Activated CD4-positive, alpha-beta T cell treated with anti-CD3 and anti-CD28 coated beads for 36 hours (primary cell): ENCODE measurements at regions of chr12 and their contacts with region 1.

Region 1: GRCh38 chr12:54398995-54399793 is 14.7 kb upstream of the ZNF385A start:
- DNase-seq: peak; percentile 92
- ATAC-seq: peak; percentile 95
- H3K4me3 Mint-ChIP-seq: no peak overlapping the region
- H3K27ac Mint-ChIP-seq: no peak overlapping the region
- H3K4me1 Mint-ChIP-seq: peaks cover 6% of the 10 kb centered on the region
- H3K27me3 Mint-ChIP-seq: no peaks in the 10 kb centered on the region

Region 2: DNA sequence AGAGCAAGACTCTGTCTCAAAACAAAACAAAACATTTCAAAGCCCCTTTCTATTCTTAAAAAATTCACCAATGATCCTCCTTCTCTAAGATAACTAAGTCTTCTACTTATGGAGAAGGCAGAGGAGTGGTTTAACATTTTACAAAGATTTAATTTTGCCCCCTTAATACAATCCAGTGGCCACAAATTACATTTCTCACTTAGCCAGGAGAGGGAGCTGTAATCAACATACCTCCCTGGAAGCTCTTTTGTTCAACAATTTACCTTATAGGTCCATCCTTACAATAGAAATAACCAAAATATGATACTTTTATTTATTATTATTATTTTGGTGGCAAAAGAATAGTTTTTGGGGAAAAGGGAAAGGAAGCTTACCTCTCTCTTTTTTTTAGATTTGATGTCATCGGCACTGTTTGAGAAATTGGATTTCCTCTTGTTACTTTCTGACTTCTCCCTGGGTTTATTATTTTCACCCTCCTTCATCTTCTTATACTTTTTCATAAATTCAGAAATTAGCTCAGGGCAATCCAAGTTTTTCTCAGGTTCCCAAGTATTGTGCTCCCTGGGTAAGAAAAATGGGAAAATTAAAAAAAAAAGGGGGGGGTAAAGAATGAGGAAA is 147.4 kb before region 1 on chr12:
- CTCF ChIA-PET with region 1: interaction called, 11 read pairs
- POLR2A ChIA-PET with region 1: no interaction called
- intact Hi-C with region 1: no loop called
- DNase-seq: no peak
- ATAC-seq: peak; percentile 75
- H3K4me3 Mint-ChIP-seq: no peak overlapping the region
- H3K27ac Mint-ChIP-seq: no peak overlapping the region
- H3K4me1 Mint-ChIP-seq: peaks cover 10% of the 10 kb centered on the region
- H3K27me3 Mint-ChIP-seq: no peaks in the 10 kb centered on the region

Region 3: GRCh38 chr12:54388235-54389138 is 10.7 kb before region 1 on chr12:
- CTCF ChIA-PET with region 1: interaction called, 12 read pairs
- POLR2A ChIA-PET with region 1: no interaction called
- intact Hi-C with region 1: no loop called
- DNase-seq: peak; percentile 31
- ATAC-seq: no peak
- H3K4me3 Mint-ChIP-seq: no peak overlapping the region
- H3K27ac Mint-ChIP-seq: no peak overlapping the region
- H3K4me1 Mint-ChIP-seq: peaks cover 8% of the 10 kb centered on the region
- H3K27me3 Mint-ChIP-seq: no peaks in the 10 kb centered on the region

Region 4: DNA sequence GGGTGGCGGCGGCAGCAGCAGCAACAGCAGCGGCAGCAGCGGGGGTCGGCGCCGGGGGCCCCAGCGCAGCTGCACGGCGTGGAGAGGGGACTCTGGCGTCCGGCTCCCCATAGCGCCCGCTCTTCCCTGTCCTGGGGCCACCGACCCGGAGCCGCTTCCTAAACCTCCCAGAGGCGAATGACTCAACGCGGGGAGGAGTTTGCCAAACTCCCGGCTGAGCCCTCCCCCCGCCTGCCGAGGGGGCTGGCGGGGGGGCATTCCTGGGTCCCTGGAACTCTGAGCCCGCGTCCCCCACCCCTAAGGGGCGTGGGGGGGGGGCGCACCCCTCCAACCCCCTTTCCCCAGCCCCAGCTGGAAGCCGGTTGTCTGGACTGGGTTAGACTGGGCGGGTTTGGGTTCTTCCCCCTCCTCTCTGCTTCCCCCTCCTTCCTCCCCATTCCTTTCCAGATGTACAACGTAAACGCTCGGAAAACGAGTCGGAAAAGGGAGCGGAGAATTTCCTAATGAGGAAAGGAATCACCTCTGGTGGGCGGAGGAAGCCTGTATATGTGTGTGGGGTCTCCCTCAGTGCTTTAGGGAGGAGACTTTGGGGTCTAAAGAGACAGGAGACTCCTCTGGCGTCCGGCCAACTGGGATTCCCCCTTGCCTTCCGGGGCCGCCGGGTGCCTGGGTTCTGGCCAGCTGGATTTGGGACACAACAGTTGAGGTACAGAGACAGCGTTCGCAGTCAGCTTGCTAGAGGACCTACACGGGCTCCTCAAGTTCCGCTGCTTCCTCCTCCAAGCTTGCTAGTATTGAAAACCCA is 20.1 kb after region 1 on chr12 and contains the start of gene ITGA5:
- CTCF ChIA-PET with region 1: interaction called, 638 read pairs
- POLR2A ChIA-PET with region 1: no interaction called
- intact Hi-C with region 1: no loop called
- DNase-seq: peak; percentile 66
- ATAC-seq: peak; percentile 42
- H3K4me3 Mint-ChIP-seq: peak within 1 kb of the TSS; percentile 96
- H3K27ac Mint-ChIP-seq: peak within 1 kb of the TSS; percentile 95
- H3K4me1 Mint-ChIP-seq: peaks cover 42% of the 10 kb centered on the region
- H3K27me3 Mint-ChIP-seq: no peaks in the 10 kb centered on the region
- total RNA-seq, gene ITGA5: 38.6 to 58.0 TPM

Region 5: GRCh38 chr12:54463034-54463433 is 63.8 kb after region 1 on chr12:
- CTCF ChIA-PET with region 1: interaction called, 638 read pairs
- POLR2A ChIA-PET with region 1: no interaction called
- intact Hi-C with region 1: no loop called
- DNase-seq: peak; percentile 9
- ATAC-seq: no peak
- H3K4me3 Mint-ChIP-seq: no peak overlapping the region
- H3K27ac Mint-ChIP-seq: no peak overlapping the region
- H3K4me1 Mint-ChIP-seq: peaks cover 7% of the 10 kb centered on the region
- H3K27me3 Mint-ChIP-seq: peaks cover 5% of the 10 kb centered on the region